H1 (cell line): ENCODE measurements at regions of chr2 and their contacts with region 1.

Region 1: GRCh38 chr2:226799181-226799975 is at the start of gene IRS1:
- DNase-seq: peak in 1 of 2 experiments; percentile 78
- H3K4me3 ChIP-seq: peak within 1 kb of the TSS; percentile 70 to 97 (median 80)
- H3K27ac ChIP-seq: peak within 1 kb of the TSS; percentile 64; the same call in 1 of the 2 replicates
- H3K4me1 ChIP-seq: peaks cover 0 to 20% (median 16%) of the 10 kb centered on the region in 4 experiments; a peak in 6 of 7 replicates
- H3K27me3 ChIP-seq: no peaks in the 10 kb centered on the region
- CTCF ChIP-seq: peak; percentile 44 to 74 (median 51)
- EP300 ChIP-seq: no peak
- POLR2A ChIP-seq: peak in 1 of 2 experiments; percentile 46; a peak in 1 of 3 replicates
- RAD21 ChIP-seq: peak in 1 of 2 experiments; percentile 68; a peak in 2 of 4 replicates
- total RNA-seq, gene IRS1: 24.9 and 26.9 TPM in 2 replicates

Region 2: DNA sequence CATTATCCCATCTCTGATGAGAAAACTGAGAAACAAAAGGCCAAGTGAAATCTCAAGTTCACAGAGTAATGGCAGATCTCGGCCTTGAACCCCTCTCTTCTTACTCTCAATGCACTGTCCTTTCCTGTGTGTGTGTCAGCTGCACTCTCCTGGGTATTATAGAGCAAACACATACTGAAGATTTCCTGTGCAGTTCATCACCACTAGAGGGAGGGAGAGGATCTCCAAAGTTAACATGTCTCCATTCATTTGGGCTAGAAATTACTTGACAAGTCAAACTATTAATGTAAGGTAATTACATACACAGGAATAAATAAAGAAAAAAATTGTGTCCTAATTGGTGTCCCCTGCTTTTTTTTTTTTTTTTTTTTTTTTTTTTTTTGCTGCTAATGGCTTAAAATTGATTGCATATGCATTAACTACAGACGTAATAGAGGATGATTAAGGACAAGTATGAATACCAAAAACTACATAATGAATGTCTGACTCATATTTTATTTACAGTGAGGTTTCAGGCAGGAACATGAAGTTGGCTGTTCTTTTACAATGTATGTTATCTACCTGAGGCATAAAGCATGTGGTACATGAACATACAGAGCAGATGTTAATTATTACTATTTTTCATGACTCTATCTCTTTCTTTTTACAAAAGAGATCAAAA is 1130.6 kb before region 1 on chr2:
- CTCF ChIA-PET with region 1: interaction called, 10 read pairs
- POLR2A ChIA-PET with region 1: no interaction called
- DNase-seq: no peak
- H3K4me3 ChIP-seq: no peak overlapping the region
- H3K27ac ChIP-seq: no peak overlapping the region
- H3K4me1 ChIP-seq: peaks cover 0 to 3% (median 0%) of the 10 kb centered on the region in 4 experiments; a peak in 1 of 7 replicates
- H3K27me3 ChIP-seq: no peaks in the 10 kb centered on the region
- CTCF ChIP-seq: peak in 2 of 3 experiments; percentile 46 to 79; a peak in 3 of 4 replicates
- EP300 ChIP-seq: no peak
- POLR2A ChIP-seq: no peak
- RAD21 ChIP-seq: peak; percentile 75

Region 3: GRCh38 chr2:226215902-226216503 is 583.4 kb before region 1 on chr2:
- CTCF ChIA-PET with region 1: interaction called, 15 read pairs
- POLR2A ChIA-PET with region 1: no interaction called
- DNase-seq: peak; percentile 49 to 90
- H3K4me3 ChIP-seq: no peak overlapping the region
- H3K27ac ChIP-seq: no peak overlapping the region
- H3K4me1 ChIP-seq: no peaks in the 10 kb centered on the region
- H3K27me3 ChIP-seq: no peaks in the 10 kb centered on the region
- CTCF ChIP-seq: peak; percentile 81 to 93 (median 82)
- EP300 ChIP-seq: no peak
- POLR2A ChIP-seq: no peak
- RAD21 ChIP-seq: peak; percentile 91 to 94

Region 4: GRCh38 chr2:226813148-226813701 is 13.8 kb after region 1 on chr2:
- CTCF ChIA-PET with region 1: interaction called, 22 read pairs
- POLR2A ChIA-PET with region 1: no interaction called
- DNase-seq: no peak
- H3K4me3 ChIP-seq: no peak overlapping the region
- H3K27ac ChIP-seq: no peak overlapping the region
- H3K4me1 ChIP-seq: peaks cover 0 to 3% (median 0%) of the 10 kb centered on the region in 4 experiments; a peak in 1 of 7 replicates
- H3K27me3 ChIP-seq: no peaks in the 10 kb centered on the region
- CTCF ChIP-seq: peak in 2 of 3 experiments; percentile 59 to 84; a peak in 3 of 4 replicates
- EP300 ChIP-seq: no peak
- POLR2A ChIP-seq: no peak
- RAD21 ChIP-seq: peak; percentile 87

Region 5: DNA sequence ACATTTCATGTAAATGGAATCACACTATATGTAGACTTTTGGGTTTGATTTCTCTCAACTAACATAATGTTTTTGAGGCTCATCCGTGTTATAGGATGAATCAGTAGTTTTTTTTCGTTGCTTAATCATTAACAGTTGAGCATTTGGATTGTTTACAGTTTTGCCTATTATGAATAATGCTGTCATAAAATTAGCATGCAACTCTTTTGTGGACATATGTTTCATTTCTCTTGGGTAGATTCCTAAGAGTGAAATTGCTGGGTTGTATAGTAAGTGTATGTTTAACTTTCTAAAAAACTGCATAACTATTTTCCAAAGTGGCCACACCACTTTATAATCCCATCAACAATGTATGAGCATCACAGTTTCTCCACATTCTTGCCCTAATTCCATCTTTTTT is 28.8 kb after region 1 on chr2:
- CTCF ChIA-PET with region 1: interaction called, 12 read pairs
- POLR2A ChIA-PET with region 1: no interaction called
- DNase-seq: no peak
- H3K4me3 ChIP-seq: no peak overlapping the region
- H3K27ac ChIP-seq: no peak overlapping the region
- H3K4me1 ChIP-seq: no peaks in the 10 kb centered on the region
- H3K27me3 ChIP-seq: no peaks in the 10 kb centered on the region
- CTCF ChIP-seq: no peak
- EP300 ChIP-seq: no peak
- POLR2A ChIP-seq: no peak
- RAD21 ChIP-seq: no peak

Region 6: DNA sequence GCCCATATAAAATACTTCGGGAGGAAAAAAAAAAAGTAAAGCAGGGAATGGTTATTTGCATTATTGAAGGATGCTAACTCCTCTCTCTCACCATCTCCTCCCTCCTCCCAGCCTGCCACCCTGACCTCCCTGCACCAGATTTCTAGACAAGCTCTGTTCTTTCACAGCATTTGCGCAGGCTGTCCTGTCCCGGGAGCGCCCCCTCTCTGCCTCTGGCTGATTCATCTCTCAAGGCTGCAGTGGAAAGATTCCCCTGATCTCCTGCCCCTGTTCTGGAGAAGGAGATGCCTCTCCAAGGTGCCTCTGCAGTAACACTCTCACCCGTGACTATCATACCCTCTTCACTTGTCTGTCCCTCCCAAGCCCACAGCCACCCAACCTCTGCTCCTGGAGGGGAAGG is 326.1 kb after region 1 on chr2:
- CTCF ChIA-PET with region 1: interaction called, 15 read pairs
- POLR2A ChIA-PET with region 1: no interaction called
- DNase-seq: peak in 1 of 2 experiments; percentile 60
- H3K4me3 ChIP-seq: no peak overlapping the region
- H3K27ac ChIP-seq: no peak overlapping the region
- H3K4me1 ChIP-seq: no peaks in the 10 kb centered on the region
- H3K27me3 ChIP-seq: no peaks in the 10 kb centered on the region
- CTCF ChIP-seq: peak; percentile 45 to 67 (median 56)
- EP300 ChIP-seq: no peak
- POLR2A ChIP-seq: no peak
- RAD21 ChIP-seq: peak; percentile 50 to 51